Activated naive CD4-positive, alpha-beta T cell treated with anti-CD3 and anti-CD28 coated beads for 36 hours (primary cell): ENCODE measurements at regions of chr4 and their contacts with region 1.

Region 1: GRCh38 chr4:17385403-17385802 is 126.5 kb downstream of the QDPR start:
- DNase-seq: peak; percentile 13
- H3K4me3 Mint-ChIP-seq: no peak overlapping the region
- H3K27ac Mint-ChIP-seq: no peak overlapping the region
- H3K4me1 Mint-ChIP-seq: peaks cover 15% of the 10 kb centered on the region
- H3K27me3 Mint-ChIP-seq: no peaks in the 10 kb centered on the region

Region 2: GRCh38 chr4:16914208-16914607 is 471.2 kb before region 1 on chr4:
- CTCF ChIA-PET with region 1: no interaction called
- intact Hi-C with region 1: no loop called
- DNase-seq: peak; percentile 13
- H3K4me3 Mint-ChIP-seq: no peak overlapping the region
- H3K27ac Mint-ChIP-seq: no peak overlapping the region
- H3K4me1 Mint-ChIP-seq: no peaks in the 10 kb centered on the region
- H3K27me3 Mint-ChIP-seq: no peaks in the 10 kb centered on the region

Region 3: DNA sequence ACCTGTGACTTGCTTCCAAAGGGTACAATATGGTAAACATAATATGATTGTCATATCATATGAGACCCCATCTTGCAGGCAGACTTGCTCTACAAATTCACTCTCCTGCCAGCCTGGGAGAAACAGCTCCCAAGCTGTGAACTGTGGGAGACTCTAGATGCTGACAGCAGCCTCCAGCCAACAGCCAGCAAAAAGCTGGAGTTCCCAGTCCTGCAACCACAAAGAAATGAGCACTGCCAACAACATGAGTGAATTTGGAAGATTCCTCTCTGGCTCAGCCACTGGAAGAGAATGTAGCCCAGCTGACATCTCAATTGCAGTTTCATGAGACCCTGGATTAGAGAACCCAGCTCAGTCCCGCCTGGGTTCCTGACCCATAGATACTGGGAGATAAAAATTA is 18.9 kb before region 1 on chr4:
- CTCF ChIA-PET with region 1: interaction called, 4 read pairs
- intact Hi-C with region 1: loop called (anchors 2 kb)
- DNase-seq: no peak
- H3K4me3 Mint-ChIP-seq: no peak overlapping the region
- H3K27ac Mint-ChIP-seq: no peak overlapping the region
- H3K4me1 Mint-ChIP-seq: peaks cover 8% of the 10 kb centered on the region
- H3K27me3 Mint-ChIP-seq: peaks cover 2% of the 10 kb centered on the region

Region 4: GRCh38 chr4:17934286-17934685 is 548.9 kb after region 1 on chr4:
- CTCF ChIA-PET with region 1: no interaction called
- intact Hi-C with region 1: no loop called
- DNase-seq: no peak
- H3K4me3 Mint-ChIP-seq: no peak overlapping the region
- H3K27ac Mint-ChIP-seq: no peak overlapping the region
- H3K4me1 Mint-ChIP-seq: no peaks in the 10 kb centered on the region
- H3K27me3 Mint-ChIP-seq: no peaks in the 10 kb centered on the region